MCF 10A (cell line): ENCODE measurements at regions of chr1 and their contacts with region 1.

Region 1: DNA sequence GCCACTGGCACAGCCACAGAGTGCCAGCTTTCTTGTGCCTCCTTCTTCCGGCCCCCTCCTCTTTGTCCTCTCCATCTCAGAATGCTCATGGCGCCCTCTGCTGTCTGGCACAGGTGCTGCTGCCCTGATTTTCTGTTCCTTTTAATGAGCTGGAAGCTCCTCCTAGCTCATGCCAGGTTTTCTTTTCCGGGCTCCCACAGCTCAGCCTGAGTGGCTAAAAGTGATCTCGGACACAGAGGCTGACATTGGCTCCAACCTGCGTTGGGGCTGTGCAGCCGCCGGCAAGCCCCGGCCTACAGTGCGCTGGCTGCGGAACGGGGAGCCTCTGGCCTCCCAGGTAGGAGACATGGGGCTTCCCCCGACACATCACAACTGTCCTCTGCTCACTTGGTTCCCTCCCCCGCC is 18.7 kb downstream of the CNTN2 start:
- DNase-seq: peak; percentile 85
- H3K4me3 Mint-ChIP-seq: no peak overlapping the region
- H3K27ac Mint-ChIP-seq: no peak overlapping the region
- H3K4me1 Mint-ChIP-seq: no peaks in the 10 kb centered on the region
- H3K27me3 Mint-ChIP-seq: peaks cover 21% of the 10 kb centered on the region
- CTCF ChIP-seq: peak; percentile 99

Region 2: DNA sequence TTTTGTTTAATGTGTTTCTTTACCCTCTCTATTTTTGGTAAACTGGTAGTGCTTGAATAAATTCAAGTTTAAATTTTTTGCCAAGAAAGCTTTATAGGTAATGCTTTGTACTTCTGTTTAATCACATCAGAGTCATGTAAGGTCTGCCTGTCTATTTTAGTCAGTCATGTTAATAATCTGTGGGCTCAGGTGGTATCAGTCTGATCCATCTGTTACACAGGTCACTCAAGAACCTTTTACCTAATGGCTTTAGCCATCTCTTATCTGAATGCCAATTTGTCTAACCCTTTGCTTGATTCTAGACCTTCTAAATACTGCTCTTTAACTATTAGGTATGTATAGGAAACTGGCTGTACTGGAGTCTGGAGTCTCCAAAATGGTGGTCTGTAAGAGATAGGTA is 528.8 kb before region 1 on chr1:
- CTCF ChIA-PET with region 1: no interaction called
- POLR2A ChIA-PET with region 1: no interaction called
- intact Hi-C with region 1: no loop called
- DNase-seq: no peak
- H3K4me3 Mint-ChIP-seq: no peak overlapping the region
- H3K27ac Mint-ChIP-seq: no peak overlapping the region
- H3K4me1 Mint-ChIP-seq: no peaks in the 10 kb centered on the region
- H3K27me3 Mint-ChIP-seq: no peaks in the 10 kb centered on the region
- CTCF ChIP-seq: no peak

Region 3: DNA sequence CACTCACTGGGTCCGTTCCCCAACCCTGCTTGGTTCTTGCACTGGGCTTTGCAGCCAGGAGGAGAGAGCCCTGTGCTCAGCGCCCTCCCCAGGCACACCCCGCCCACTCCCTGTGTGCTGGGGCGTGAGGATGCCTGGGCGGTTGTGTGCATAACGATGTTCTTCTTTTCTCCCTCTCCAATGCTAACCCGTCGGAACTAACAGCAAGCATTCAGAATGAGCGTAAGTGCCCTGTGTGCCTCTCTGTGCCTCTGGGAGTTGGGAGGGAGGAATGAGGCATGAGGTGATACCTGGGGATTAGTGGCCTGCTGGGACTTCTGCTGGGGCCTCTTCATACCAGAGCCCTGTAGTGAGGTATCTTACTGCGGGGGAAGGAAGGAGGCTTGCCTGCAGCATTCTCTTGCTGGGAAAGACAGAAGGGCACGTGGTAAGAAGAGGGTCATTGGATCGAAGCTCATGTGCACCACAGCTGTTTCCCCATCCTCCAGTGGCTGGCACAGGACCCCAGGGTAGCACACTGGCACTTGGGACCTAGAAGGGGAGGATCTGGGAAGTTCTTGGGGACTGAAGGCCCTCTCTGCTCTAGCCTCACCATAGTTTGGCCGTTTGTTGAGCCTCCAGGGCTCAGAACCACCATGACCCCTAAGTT is 111.2 kb before region 1 on chr1:
- CTCF ChIA-PET with region 1: interaction called, 12 read pairs
- POLR2A ChIA-PET with region 1: no interaction called
- intact Hi-C with region 1: no loop called
- DNase-seq: no peak
- H3K4me3 Mint-ChIP-seq: no peak overlapping the region
- H3K27ac Mint-ChIP-seq: no peak overlapping the region
- H3K4me1 Mint-ChIP-seq: no peaks in the 10 kb centered on the region
- H3K27me3 Mint-ChIP-seq: peaks cover 61% of the 10 kb centered on the region
- CTCF ChIP-seq: no peak

Region 4: DNA sequence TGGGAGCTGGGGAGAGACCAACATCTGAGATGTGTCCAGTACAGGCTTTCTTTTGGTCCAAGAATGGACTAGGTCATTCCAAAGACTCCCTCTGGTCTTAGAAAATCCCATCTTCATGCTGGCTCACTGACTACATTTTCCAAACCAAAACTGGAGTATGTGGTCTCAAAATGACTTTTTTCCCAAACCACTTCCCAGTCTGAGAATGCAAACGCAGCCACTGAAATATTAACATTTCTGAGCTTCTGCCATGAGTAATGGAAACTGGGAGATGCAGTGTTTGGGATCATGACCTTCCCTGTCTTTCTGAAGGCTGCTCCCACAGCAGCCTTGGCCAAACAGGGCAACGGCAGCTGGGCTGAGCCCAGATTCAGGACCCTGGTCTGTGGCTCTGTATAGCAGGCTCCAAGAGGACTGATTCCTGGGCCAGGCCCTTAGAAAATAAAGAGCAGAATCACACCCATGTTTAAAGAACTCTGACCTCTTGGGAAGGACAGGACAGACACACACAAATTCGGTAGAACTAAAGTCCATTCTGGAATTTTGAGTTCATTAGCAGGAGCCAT is 80.7 kb before region 1 on chr1:
- CTCF ChIA-PET with region 1: interaction called, 331 read pairs
- POLR2A ChIA-PET with region 1: interaction called, 4 read pairs
- intact Hi-C with region 1: no loop called
- DNase-seq: no peak
- H3K4me3 Mint-ChIP-seq: no peak overlapping the region
- H3K27ac Mint-ChIP-seq: no peak overlapping the region
- H3K4me1 Mint-ChIP-seq: no peaks in the 10 kb centered on the region
- H3K27me3 Mint-ChIP-seq: peaks cover 62% of the 10 kb centered on the region
- CTCF ChIP-seq: no peak

Region 5: DNA sequence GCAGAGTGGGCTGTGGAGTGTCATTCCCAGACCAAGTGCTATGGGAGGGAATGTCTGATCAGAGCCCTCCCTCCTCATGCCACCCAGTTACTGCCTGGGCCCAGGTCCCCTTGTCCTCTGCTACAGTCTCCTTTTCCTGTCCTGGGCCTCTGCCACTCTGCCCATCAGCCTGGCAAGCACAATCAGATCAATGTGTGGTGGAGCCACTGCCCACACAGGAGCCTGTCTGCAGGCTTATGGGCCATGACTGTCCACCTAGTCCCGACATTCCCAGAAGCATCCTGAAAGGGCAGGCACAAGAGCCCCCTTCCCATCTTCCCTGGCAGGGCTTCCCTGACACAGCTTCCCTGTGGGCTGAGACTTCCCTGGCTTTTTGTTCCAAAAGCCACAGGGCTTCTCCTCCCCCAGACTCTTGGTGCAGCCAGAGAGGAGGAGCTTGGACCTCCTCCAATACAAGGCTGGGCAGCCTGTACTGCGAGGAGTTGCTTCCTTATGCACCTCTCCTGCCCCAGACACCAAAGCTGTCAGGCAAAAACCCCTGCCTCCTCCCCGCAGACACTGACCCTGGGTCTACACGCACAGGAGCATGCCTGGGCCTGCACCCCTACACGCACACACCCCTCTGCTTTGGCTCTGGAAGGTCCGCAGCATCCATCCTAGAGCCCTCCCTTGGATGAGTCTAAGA is 47.8 kb before region 1 on chr1:
- CTCF ChIA-PET with region 1: interaction called, 47 read pairs
- POLR2A ChIA-PET with region 1: no interaction called
- intact Hi-C with region 1: no loop called
- DNase-seq: peak; percentile 45
- H3K4me3 Mint-ChIP-seq: no peak overlapping the region
- H3K27ac Mint-ChIP-seq: no peak overlapping the region
- H3K4me1 Mint-ChIP-seq: peaks cover 6% of the 10 kb centered on the region
- H3K27me3 Mint-ChIP-seq: peaks cover 63% of the 10 kb centered on the region
- CTCF ChIP-seq: no peak

Region 6: DNA sequence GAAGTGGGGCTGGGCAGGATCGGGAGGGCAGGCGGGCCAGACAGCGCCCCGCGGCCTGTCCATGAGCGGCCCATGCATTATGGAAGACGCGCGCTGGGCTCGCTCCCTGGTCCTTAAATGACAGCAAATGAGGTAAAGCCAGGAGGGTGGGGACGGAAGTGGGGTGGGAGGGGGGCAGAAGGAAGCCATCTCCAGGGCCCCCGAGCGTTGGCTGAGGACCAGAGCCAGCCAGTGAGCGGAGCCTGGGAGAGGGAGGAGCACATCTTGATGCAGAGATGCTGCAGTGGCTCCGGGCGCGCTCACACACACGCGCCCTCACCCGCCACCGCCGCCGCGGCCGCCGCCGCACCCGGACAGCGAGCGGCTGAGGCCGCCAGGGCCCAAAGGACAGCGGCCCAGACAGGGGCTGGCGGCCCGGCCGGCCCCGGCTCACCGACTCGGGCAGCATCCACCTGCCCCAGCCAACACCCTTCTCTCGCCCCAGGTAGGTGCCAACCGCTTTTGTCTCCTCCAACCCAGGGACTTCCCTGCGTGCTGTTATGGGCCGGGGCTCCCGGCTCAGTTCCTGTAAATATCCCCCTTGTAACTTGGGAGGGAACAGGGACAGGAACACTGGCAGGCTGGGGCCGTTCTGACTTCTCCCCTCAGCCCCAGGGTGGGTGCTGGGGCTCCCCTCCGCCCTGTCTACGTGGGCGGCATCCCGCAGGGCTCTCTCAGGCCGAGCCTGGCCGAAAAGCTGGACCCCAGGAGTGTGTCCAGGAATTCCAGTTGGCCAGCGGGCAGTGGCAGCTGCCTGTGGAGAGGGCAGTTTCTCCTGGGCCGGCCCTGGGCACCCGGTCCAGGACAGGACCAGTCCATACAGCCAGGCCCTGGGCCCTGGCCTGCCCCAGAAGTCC is 18.5 kb before region 1 on chr1 and contains the start of gene CNTN2:
- CTCF ChIA-PET with region 1: interaction called, 111 read pairs
- POLR2A ChIA-PET with region 1: no interaction called
- intact Hi-C with region 1: no loop called
- DNase-seq: no peak
- H3K4me3 Mint-ChIP-seq: no peak within 1 kb of the TSS
- H3K27ac Mint-ChIP-seq: no peak within 1 kb of the TSS
- H3K4me1 Mint-ChIP-seq: no peaks in the 10 kb centered on the region
- H3K27me3 Mint-ChIP-seq: peaks cover 84% of the 10 kb centered on the region
- CTCF ChIP-seq: no peak
- total RNA-seq, gene CNTN2: 0.05 TPM in 1 of 2 replicates, not detected in the other

Region 7: GRCh38 chr1:205098242-205098641 is 36.6 kb after region 1 on chr1:
- CTCF ChIA-PET with region 1: interaction called, 14 read pairs
- POLR2A ChIA-PET with region 1: no interaction called
- intact Hi-C with region 1: no loop called
- DNase-seq: no peak
- H3K4me3 Mint-ChIP-seq: no peak overlapping the region
- H3K27ac Mint-ChIP-seq: no peak overlapping the region
- H3K4me1 Mint-ChIP-seq: no peaks in the 10 kb centered on the region
- H3K27me3 Mint-ChIP-seq: no peaks in the 10 kb centered on the region
- CTCF ChIP-seq: no peak

Region 8: DNA sequence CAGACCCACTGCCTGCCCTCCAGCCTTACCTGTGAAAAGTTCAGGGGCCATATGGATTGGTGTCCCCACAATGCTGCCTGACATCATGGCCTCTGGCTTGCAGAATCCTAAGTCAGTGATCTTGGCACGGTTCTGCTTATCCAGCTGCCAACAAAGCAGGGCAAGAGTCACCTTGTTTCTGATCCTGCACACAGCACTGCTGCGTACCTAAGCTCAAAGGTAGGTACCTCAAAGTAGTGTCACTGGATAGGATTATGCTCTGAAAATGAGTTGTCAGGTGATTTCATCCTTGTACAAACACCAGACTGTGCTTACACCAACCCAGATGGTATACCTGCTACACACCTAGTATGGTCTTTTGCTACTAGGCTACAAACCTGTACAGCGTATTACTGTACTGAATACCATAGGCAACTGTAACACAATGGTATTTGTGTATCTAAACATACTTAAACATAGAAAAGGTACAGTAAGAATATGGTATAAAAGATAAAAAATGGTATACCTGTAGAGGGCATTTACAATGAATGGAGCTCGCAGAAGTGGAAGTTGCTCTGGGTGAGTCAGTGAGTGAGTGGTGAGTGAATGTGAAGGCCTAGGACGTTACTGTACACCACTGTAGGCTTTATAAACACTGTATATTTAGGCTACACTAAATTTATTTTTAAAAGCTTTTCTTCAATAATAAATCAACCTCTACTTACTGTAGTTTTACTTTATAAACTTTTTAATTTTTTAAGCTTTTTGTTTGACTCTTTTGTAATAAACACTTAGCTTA is 89.2 kb after region 1 on chr1:
- CTCF ChIA-PET with region 1: interaction called, 13 read pairs
- POLR2A ChIA-PET with region 1: no interaction called
- intact Hi-C with region 1: no loop called
- DNase-seq: no peak
- H3K4me3 Mint-ChIP-seq: no peak overlapping the region
- H3K27ac Mint-ChIP-seq: no peak overlapping the region
- H3K4me1 Mint-ChIP-seq: peaks cover 8% of the 10 kb centered on the region
- H3K27me3 Mint-ChIP-seq: no peaks in the 10 kb centered on the region
- CTCF ChIP-seq: no peak

Region 9: GRCh38 chr1:205321164-205321958 is 259.7 kb after region 1 on chr1 and contains the start of gene NUAK2:
- CTCF ChIA-PET with region 1: no interaction called
- POLR2A ChIA-PET with region 1: no interaction called
- intact Hi-C with region 1: no loop called
- DNase-seq: peak; percentile 97
- H3K4me3 Mint-ChIP-seq: peak within 1 kb of the TSS; percentile 99
- H3K27ac Mint-ChIP-seq: peak within 1 kb of the TSS; percentile 54
- H3K4me1 Mint-ChIP-seq: peaks cover 56% of the 10 kb centered on the region
- H3K27me3 Mint-ChIP-seq: no peaks in the 10 kb centered on the region
- CTCF ChIP-seq: peak; percentile 64
- total RNA-seq, gene NUAK2: 2.8 and 6.0 TPM in 2 replicates

Region 10: GRCh38 chr1:205950280-205950679 is 888.6 kb after region 1 on chr1:
- CTCF ChIA-PET with region 1: no interaction called
- POLR2A ChIA-PET with region 1: no interaction called
- intact Hi-C with region 1: no loop called
- DNase-seq: peak; percentile 98
- H3K4me3 Mint-ChIP-seq: peak overlapping the region; percentile 7
- H3K27ac Mint-ChIP-seq: peak overlapping the region; percentile 1
- H3K4me1 Mint-ChIP-seq: peaks cover 69% of the 10 kb centered on the region
- H3K27me3 Mint-ChIP-seq: peaks cover 68% of the 10 kb centered on the region
- CTCF ChIP-seq: no peak